Activated T-helper 1 cell treated with anti-CD3 and anti-CD28 coated beads, Interleukin-12 subunit alpha, Interleukin-12 subunit beta, Interleukin-2, Interleukin-4 antibody, amounts not matched to agents 30 ng/mL and 10 ng/mL and 1 ng/mL, durations not matched to agents 14 hours and 24 hours and 36 hours (primary cell): ENCODE measurements at regions of chr12 and their contacts with region 1.

Region 1: DNA sequence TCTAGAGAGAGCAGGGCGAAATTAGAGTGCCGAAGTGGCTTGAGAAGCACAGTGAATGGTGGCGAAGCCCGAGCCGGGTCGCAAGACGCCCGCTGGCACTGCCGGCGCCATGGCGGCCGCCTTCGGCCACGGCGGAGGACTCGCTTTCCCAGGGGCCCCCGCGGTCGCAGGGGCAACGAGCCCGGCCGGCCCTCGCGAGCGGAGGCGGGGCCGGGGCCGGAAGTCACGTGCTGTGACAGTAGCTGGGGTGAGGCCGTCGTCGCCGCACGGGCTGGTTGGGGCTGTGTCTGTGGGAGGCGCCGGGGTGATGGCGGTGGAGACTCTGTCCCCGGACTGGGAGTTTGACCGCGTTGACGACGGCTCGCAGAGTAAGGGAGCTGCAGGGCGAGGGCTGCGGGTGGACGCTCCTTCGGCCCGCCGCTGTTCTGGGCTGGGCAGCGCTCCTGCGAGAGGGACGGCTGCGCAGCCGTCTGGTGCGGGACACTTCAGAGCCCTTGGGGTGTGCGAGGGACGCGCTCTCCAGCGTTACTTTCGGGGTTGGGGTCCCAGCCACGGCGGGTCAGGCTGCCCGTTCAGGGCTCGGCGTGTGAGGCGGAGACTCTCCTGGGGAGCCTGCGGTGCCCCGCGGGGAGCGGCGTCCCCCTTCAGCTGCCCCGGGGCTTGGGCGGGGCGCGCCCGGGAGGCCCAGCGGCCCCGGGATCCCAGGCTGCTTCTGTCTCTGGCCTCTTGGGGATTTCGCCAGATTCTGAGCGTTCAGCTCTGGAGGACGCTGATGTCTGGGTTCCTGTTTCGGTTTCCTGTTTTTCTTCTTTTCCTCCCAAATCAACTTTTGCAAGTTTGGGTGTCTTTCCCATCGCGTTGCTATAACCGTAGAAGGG is at the start of gene WASHC4:
- DNase-seq: peak; percentile 96
- H3K4me3 Mint-ChIP-seq: peak within 1 kb of the TSS; percentile 95
- H3K27ac Mint-ChIP-seq: peak within 1 kb of the TSS; percentile 94
- H3K4me1 Mint-ChIP-seq: peaks cover 44% of the 10 kb centered on the region
- H3K27me3 Mint-ChIP-seq: peaks cover 24% of the 10 kb centered on the region
- total RNA-seq, gene WASHC4: 34.5 and 36.3 TPM in 2 replicates

Region 2: DNA sequence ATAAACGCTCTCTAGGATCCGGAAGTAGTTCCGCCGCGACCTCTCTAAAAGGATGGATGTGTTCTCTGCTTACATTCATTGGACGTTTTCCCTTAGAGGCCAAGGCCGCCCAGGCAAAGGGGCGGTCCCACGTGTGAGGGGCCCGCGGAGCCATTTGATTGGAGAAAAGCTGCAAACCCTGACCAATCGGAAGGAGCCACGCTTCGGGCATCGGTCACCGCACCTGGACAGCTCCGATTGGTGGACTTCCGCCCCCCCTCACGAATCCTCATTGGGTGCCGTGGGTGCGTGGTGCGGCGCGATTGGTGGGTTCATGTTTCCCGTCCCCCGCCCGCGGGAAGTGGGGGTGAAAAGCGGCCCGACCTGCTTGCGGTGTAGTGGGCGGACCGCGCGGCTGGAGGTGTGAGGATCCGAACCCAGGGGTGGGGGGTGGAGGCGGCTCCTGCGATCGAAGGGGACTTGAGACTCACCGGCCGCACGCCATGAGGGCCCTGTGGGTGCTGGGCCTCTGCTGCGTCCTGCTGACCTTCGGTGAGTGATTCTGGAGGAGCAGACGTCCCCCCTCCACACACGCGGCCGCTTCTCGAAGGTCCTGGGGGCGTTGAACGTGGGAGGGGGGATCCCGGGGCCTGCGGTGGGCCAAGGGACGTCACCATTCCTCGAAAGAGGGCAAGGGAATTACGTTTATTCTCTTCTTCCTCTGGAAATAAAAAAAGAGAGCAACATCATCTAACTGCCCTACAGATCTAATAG is 1177.5 kb before region 1 on chr12 and contains the start of gene HSP90B1:
- intact Hi-C with region 1: loop called (anchors 1 kb)
- DNase-seq: peak; percentile 100
- H3K4me3 Mint-ChIP-seq: peak within 1 kb of the TSS; percentile 91
- H3K27ac Mint-ChIP-seq: peak within 1 kb of the TSS; percentile 99
- H3K4me1 Mint-ChIP-seq: peaks cover 73% of the 10 kb centered on the region
- H3K27me3 Mint-ChIP-seq: peaks cover 6% of the 10 kb centered on the region
- total RNA-seq, gene HSP90B1: 427 and 446 TPM in 2 replicates

Region 3: DNA sequence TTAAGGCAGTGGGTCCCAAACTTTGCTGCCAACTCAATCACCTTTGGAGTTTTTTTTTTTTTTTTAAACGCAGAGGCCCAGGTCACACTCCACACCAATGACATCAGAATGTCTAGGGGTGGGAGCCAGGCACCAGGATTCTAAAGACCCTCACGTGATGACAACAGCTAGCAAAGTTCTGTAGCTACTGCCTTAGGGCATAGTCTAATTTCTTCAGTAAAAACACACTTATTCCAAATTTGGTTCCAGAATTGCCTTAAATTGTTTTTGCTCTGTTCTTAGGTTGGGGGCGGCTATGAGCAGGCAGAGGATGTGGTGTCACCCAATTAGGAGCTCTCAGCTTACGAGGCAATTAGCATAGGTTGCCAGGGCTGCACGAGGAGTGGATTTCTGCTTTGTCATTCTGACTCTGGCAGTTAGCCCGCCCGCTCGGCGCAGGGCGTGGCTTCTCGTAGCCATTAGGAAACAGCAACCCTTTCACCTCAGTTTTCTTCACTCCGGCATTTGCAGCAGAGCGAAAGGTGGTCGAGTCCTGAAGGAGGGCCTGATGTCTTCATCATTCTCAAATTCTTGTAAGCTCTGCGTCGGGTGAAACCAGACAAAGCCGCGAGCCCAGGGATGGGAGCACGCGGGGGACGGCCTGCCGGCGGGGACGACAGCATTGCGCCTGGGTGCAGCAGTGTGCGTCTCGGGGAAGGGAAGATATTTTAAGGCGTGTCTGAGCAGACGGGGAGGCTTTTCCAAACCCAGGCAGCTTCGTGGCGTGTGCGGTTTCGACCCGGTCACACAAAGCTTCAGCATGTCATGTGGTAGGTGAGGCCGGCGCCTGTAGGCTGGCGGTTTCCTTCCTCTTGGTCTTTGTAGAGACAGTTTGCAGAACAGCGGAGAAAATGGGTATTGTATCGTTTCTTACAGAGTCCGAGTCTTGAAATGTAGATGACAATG is 820.9 kb before region 1 on chr12:
- intact Hi-C with region 1: loop called (anchors 2 kb)
- DNase-seq: peak; percentile 90
- H3K4me3 Mint-ChIP-seq: peak overlapping the region; percentile 98
- H3K27ac Mint-ChIP-seq: peak overlapping the region; percentile 99
- H3K4me1 Mint-ChIP-seq: peaks cover 27% of the 10 kb centered on the region
- H3K27me3 Mint-ChIP-seq: no peaks in the 10 kb centered on the region

Region 4: DNA sequence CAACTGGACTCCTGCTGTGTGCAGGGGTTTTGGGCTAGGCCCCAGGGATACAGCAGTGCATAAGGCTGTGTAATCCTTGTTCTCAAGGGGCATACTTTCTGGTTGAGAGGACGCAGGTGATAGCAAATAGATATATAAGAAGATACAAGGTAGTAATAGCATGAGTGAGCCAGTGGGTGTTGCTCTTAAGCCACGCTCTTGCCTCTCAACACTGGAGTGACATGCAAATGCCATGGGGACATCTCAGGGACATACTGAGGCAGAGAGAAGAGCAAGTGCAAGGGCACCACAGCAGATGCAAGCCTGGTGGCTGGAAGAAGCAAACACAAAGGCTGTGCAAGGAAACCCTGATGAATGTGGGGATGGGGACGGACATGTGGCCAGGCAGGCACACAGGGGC is 427.7 kb before region 1 on chr12:
- intact Hi-C with region 1: loop called (anchors 2 kb)
- DNase-seq: no peak
- H3K4me3 Mint-ChIP-seq: no peak overlapping the region
- H3K27ac Mint-ChIP-seq: peak overlapping the region; percentile 85
- H3K4me1 Mint-ChIP-seq: peaks cover 84% of the 10 kb centered on the region
- H3K27me3 Mint-ChIP-seq: no peaks in the 10 kb centered on the region

Region 5: GRCh38 chr12:105013892-105014291 is 93.8 kb before region 1 on chr12:
- intact Hi-C with region 1: no loop called
- DNase-seq: no peak
- H3K4me3 Mint-ChIP-seq: no peak overlapping the region
- H3K27ac Mint-ChIP-seq: no peak overlapping the region
- H3K4me1 Mint-ChIP-seq: no peaks in the 10 kb centered on the region
- H3K27me3 Mint-ChIP-seq: no peaks in the 10 kb centered on the region

Region 6: DNA sequence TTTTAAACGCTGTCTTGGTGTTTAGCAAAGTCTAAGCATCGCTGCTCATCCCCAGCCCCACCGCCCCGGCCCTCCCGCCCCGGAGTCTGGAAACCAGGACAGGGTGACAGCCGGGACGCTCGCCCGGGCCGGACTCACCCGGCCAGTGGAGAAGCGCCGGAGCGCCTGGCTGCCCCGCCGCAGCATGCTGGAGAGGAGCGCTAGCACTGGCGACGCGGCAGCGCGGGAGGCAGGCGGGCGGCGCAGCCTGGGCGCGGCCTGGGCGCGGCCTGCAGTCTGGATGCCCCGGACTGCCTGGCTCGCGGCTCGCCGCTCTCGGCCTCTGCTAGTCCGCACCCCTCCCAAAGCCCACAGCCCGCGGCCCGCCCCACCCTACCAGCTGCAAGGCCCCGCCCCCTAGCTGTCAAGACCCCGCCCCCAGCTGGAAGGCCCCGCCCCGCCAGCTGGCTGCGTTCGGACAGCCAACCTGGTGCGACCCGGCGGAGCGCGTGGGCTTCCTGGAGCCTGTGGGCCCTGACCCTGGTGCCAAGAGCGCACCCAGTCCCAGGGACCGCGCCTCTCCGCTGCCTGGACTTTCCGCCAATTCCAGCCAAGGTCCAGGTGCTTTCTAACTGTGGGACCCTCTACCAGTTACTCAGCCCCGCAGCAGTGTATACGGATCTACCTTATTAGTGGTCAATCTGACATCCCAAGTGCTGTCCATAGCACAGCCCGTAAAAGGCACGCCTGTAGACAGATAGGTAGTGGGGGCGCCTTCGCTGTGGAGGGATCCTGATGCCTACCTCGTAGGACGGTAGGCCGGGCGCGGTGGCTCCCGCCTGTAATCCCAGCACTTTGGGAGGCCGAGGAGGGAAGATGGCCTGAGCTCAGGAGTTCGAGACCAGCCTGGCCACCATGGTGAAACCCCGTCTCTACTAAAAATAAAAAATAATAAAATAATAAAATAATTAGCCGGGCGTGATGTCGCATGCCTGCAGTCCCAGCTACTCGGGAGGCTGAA is 23.2 kb before region 1 on chr12 and contains the start of gene ALDH1L2:
- intact Hi-C with region 1: loop called (anchors 1 kb)
- DNase-seq: peak; percentile 62
- H3K4me3 Mint-ChIP-seq: peak within 1 kb of the TSS; percentile 82
- H3K27ac Mint-ChIP-seq: no peak within 1 kb of the TSS
- H3K4me1 Mint-ChIP-seq: peaks cover 8% of the 10 kb centered on the region
- H3K27me3 Mint-ChIP-seq: peaks cover 23% of the 10 kb centered on the region
- total RNA-seq, gene ALDH1L2: 1.1 and 1.5 TPM in 2 replicates

Region 7: GRCh38 chr12:105882404-105882803 is 774.7 kb after region 1 on chr12:
- intact Hi-C with region 1: no loop called
- DNase-seq: no peak
- H3K4me3 Mint-ChIP-seq: no peak overlapping the region
- H3K27ac Mint-ChIP-seq: no peak overlapping the region
- H3K4me1 Mint-ChIP-seq: no peaks in the 10 kb centered on the region
- H3K27me3 Mint-ChIP-seq: no peaks in the 10 kb centered on the region

Region 8: DNA sequence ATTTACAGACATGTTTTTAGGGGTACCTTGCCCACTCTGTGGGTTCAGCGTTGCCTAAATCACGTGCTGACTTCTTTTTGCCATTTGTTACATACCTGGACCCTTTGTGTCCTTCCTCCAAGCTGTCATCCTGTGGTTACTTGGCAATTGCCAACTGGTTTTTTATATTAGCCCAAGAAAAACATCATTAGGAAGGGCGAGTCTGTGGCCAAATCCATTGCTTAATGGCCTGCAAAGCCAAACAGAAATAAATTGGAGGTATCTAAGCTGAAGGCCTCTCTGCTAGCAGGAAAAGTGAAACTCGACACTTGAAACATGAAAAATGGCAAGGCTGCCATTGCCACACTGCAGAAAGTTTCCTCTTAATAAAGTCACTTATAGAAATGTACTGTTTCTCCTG is 840.6 kb after region 1 on chr12:
- intact Hi-C with region 1: no loop called
- DNase-seq: no peak
- H3K4me3 Mint-ChIP-seq: no peak overlapping the region
- H3K27ac Mint-ChIP-seq: no peak overlapping the region
- H3K4me1 Mint-ChIP-seq: no peaks in the 10 kb centered on the region
- H3K27me3 Mint-ChIP-seq: no peaks in the 10 kb centered on the region

Region 9: GRCh38 chr12:107093417-107094182 is 1985.9 kb after region 1 on chr12 and contains the start of gene CRY1:
- intact Hi-C with region 1: loop called (anchors 10 kb)
- DNase-seq: peak; percentile 89
- H3K4me3 Mint-ChIP-seq: no peak within 1 kb of the TSS
- H3K27ac Mint-ChIP-seq: no peak within 1 kb of the TSS
- H3K4me1 Mint-ChIP-seq: peaks cover 13% of the 10 kb centered on the region
- H3K27me3 Mint-ChIP-seq: peaks cover 10% of the 10 kb centered on the region
- total RNA-seq, gene CRY1: 23.4 and 23.5 TPM in 2 replicates